Right cardiac atrium (tissue), 5 donors: ENCODE measurements at regions of chr4 and their contacts with region 1.

Region 1: GRCh38 chr4:11720292-11720691 is 291.6 kb upstream of the HS3ST1 start:
- DNase-seq: no peak
- ATAC-seq: peak; percentile 69 to 70
- H3K4me3 ChIP-seq: no peak overlapping the region
- H3K27ac ChIP-seq: no peak overlapping the region
- H3K4me1 ChIP-seq: no peaks in the 10 kb centered on the region
- H3K27me3 ChIP-seq: no peaks in the 10 kb centered on the region

Region 2: DNA sequence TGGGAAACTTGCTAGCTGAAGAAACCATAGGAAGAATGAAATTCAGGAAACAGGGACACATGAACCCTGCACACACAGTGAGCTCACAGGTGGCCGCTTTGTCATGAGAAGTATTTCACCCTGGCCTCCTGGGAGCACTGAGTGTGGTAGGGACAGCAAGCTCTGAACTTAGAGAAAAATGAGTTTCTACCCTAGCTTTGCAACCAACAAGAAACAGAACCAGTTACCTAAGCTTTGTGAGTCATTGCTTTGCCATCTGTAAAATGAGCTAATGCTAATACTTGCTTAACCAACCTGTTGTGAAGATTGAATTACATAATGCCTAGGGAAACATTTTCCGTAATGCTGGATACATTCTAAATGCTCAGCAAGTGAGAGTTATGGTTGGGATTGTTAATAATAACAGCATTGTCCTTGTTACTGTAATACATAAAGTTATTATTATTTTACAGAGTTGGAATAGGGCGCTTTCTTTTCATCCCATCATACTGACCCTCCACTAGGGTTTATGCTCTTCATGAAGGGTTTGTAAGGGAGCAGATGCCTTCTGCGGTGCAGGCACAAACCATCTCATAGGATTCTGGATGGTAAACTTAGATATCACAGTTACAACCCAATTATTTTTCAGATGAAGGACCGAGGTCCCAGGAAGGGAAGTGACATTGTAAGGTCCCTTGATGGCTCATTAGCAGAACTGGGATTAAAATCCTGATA is 84.8 kb before region 1 on chr4:
- intact Hi-C with region 1: loop called in 1 of 4 experiments (anchors 10 kb)
- DNase-seq: no peak
- ATAC-seq: no peak
- H3K4me3 ChIP-seq: no peak overlapping the region
- H3K27ac ChIP-seq: no peak overlapping the region
- H3K4me1 ChIP-seq: no peaks in the 10 kb centered on the region
- H3K27me3 ChIP-seq: no peaks in the 10 kb centered on the region